Sigmoid colon (tissue), 7 donors: ENCODE measurements at regions of chr2 and their contacts with region 1.

Region 1: DNA sequence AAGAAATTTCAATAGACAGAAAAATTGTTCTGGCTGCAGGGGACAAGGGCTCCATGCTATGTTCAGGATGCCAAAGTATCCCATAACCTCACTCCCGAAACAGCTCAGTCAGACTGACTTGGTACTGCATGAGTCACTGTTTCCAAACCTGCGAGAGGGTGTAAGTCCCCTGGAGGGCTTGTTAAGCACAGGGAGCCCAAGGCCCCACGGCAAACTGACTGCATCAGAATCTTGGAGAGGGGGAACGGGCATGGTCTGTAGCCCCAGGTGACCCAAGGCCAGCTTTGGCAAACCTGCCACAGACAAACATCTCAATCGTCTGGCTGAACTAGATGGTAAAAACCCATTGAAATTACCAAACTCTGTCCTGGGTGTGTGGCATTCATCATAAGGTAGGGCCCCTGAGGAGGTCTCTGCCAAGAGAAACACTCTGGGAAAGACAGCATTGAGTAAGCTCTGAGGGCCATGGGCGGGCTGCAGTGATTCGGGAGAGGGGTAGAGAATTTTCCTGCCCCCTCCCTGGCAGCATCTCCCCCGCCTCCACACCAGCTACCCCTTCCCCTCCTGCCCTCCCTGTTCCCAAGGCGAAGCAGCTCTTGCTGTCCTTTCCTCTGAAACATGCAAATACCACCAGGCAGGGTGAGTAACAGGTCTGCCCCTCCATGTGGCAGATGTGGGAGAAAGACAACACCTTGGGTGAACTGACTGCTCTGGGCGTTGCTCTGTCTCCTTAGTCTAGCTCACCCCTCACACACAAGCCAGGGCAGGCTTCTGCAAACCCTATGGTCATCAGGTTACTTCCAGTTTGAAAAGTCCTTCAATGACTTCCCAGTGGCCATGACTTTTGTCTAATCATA is 274.7 kb upstream of the SIX2 start:
- DNase-seq: no peak
- H3K4me3 ChIP-seq: no peak overlapping the region
- H3K27ac ChIP-seq: no peak overlapping the region
- H3K4me1 ChIP-seq: no peaks in the 10 kb centered on the region
- H3K27me3 ChIP-seq: no peaks in the 10 kb centered on the region
- CTCF ChIP-seq: no peak
- EP300 ChIP-seq: no peak
- POLR2A ChIP-seq: no peak

Region 2: GRCh38 chr2:45218931-45219339 is 65.1 kb before region 1 on chr2:
- intact Hi-C with region 1: loop called (anchors 5 kb)
- DNase-seq: no peak
- H3K4me3 ChIP-seq: no peak overlapping the region
- H3K27ac ChIP-seq: no peak overlapping the region
- H3K4me1 ChIP-seq: no peaks in the 10 kb centered on the region
- H3K27me3 ChIP-seq: peaks cover 0 to 3% (median 0%) of the 10 kb centered on the region in 3 donors
- CTCF ChIP-seq: no peak
- EP300 ChIP-seq: no peak
- POLR2A ChIP-seq: no peak